GM18951 (cell line): ENCODE measurements at regions of chr2 and their contacts with region 1.

Region 1: DNA sequence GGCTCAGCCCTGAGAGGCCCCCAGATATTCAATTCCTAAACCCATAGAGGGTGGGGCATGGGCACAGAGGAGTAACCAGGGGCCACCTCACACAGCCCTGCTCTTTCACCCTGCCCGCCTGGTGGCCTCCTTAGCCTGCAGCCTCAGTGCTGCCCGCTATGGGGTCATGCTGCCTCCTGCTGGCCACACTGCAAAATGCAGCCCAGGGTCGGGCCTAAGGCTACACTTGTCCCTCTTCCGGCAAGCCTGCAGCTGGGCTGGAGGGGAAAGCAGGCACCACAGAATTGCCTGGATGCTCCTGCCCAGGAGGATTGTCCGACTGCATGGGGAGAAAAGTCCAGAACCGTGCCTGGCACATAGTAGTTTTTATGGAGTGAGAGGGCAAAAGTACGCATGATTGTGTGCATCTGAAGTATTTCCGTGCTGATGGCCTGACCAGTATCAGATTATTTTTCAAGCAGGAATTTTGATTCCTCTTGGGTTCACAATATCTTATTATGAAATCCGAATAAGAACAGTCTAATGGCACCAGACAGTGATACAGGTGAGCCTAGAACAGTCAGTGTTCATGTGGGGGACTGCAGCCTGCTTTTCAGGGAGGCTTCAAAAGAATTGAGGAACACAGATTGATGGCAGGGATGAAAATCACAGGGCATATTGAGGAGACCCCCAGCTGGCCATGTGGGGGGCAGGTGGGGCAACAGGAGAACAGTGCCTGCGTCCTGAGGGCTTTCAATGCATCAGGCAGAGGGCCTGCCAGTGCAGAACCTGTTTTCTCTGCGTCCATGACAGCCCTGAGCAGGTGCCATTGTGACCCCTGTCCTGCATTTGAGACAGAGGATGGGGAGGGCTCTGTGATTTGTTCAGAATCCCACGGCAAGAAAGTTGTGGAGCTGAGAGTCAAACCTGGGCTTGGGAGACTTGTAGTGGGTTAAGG is 51.2 kb upstream of the ALPP start:
- POLR2A ChIP-seq: no peak

Region 2: GRCh38 chr2:231929961-231930592 is 397.3 kb before region 1 on chr2:
- in situ Hi-C with region 1: loop called (anchors 10 kb)
- POLR2A ChIP-seq: no peak

Region 3: GRCh38 chr2:232438951-232439757 is 111.8 kb after region 1 on chr2:
- in situ Hi-C with region 1: loop called (anchors 5 kb)
- POLR2A ChIP-seq: no peak